MCF 10A (cell line): ENCODE measurements at regions of chr1 and their contacts with region 1.

Region 1: GRCh38 chr1:91885716-91886506 is at the start of gene TGFBR3:
- DNase-seq: peak; percentile 86
- H3K4me3 Mint-ChIP-seq: peak within 1 kb of the TSS; percentile 99
- H3K27ac Mint-ChIP-seq: peak within 1 kb of the TSS; percentile 92
- H3K4me1 Mint-ChIP-seq: peaks cover 26% of the 10 kb centered on the region
- H3K27me3 Mint-ChIP-seq: no peaks in the 10 kb centered on the region
- CTCF ChIP-seq: peak; percentile 51
- total RNA-seq, gene TGFBR3: 7.0 and 12.0 TPM in 2 replicates

Region 2: GRCh38 chr1:91511386-91511785 is 374.5 kb before region 1 on chr1:
- CTCF ChIA-PET with region 1: interaction called, 24 read pairs
- POLR2A ChIA-PET with region 1: interaction called, 12 read pairs
- intact Hi-C with region 1: loop called (anchors 5 kb)
- DNase-seq: peak; percentile 59
- H3K4me3 Mint-ChIP-seq: no peak overlapping the region
- H3K27ac Mint-ChIP-seq: no peak overlapping the region
- H3K4me1 Mint-ChIP-seq: peaks cover 15% of the 10 kb centered on the region
- H3K27me3 Mint-ChIP-seq: no peaks in the 10 kb centered on the region
- CTCF ChIP-seq: peak; percentile 62

Region 3: DNA sequence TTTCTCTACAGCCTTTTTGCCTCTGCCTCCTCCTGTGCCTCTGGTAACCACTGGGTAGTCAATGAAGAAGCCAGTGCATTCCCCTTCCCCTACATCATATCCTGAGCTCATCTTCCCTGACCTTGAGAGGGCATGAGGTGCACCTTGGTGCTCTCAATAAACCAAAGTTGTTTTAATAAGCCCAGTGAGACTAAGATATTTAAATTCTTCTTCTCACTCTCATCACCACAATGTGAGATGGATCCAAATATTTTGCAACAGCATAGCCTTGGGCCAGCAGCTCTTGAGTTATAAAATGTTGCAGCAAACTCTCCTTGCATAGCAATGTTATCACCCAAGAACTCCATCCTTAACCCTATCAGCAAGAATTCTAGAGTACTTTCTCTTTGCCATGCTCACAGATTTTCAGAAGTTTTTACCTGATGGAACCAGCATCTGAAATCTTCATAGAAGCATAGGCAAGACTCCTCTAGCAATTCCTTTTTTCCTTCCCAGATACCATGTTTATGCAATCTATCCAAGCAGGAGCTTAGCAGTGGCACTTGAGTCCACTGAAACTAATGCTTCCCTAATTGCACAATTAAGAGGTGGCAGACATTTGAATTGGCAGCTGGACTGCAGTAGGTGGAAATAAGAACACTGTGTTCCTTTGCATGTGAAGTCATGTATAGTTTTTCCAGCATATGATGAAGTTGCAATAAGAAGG is 348.5 kb before region 1 on chr1:
- CTCF ChIA-PET with region 1: interaction called, 9 read pairs
- POLR2A ChIA-PET with region 1: interaction called, 18 read pairs
- intact Hi-C with region 1: no loop called
- DNase-seq: peak; percentile 66
- H3K4me3 Mint-ChIP-seq: peak overlapping the region; percentile 19
- H3K27ac Mint-ChIP-seq: peak overlapping the region; percentile 76
- H3K4me1 Mint-ChIP-seq: peaks cover 25% of the 10 kb centered on the region
- H3K27me3 Mint-ChIP-seq: no peaks in the 10 kb centered on the region
- CTCF ChIP-seq: no peak

Region 4: GRCh38 chr1:91742848-91743292 is 143.0 kb before region 1 on chr1:
- CTCF ChIA-PET with region 1: interaction called, 4 read pairs
- POLR2A ChIA-PET with region 1: interaction called, 10 read pairs
- intact Hi-C with region 1: no loop called
- DNase-seq: peak; percentile 87
- H3K4me3 Mint-ChIP-seq: no peak overlapping the region
- H3K27ac Mint-ChIP-seq: peak overlapping the region; percentile 84
- H3K4me1 Mint-ChIP-seq: peaks cover 47% of the 10 kb centered on the region
- H3K27me3 Mint-ChIP-seq: no peaks in the 10 kb centered on the region
- CTCF ChIP-seq: no peak

Region 5: DNA sequence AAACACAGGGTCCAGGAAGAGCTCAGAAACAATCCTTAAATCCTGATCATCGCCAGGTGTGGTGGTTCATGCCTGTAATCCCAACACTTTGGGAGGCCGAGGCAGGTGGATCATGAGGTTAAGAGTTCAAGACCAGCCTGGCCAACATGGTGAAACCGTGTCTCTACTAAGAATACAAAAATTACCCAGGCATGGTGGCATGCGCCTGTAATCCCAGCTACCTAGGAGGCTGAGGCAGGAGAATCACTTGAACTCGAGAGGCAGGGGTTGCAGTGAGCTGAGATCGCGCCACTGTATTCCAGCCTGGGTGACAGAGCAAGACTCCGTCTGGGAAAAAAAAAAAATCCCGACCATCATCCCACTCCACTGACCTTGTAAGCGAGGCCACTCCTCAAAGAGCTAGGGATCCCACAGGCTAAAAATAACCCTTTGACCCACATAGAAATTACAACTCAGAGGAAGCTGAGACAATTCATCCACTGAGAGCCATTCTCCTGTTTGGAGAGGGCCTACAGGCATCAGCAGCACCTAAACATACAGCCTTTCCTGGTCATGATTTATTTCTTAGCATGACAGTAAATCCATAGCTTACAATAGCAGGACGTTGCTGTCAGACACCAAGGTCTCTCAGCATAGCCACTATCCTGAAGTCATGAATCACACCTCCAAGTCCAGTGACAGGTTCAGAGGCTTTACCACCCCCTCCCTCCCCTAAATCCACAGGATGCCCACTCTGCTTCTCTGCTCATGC is 66.7 kb before region 1 on chr1:
- CTCF ChIA-PET with region 1: interaction called, 10 read pairs
- POLR2A ChIA-PET with region 1: interaction called, 8 read pairs
- intact Hi-C with region 1: no loop called
- DNase-seq: no peak
- H3K4me3 Mint-ChIP-seq: no peak overlapping the region
- H3K27ac Mint-ChIP-seq: peak overlapping the region; percentile 85
- H3K4me1 Mint-ChIP-seq: peaks cover 32% of the 10 kb centered on the region
- H3K27me3 Mint-ChIP-seq: no peaks in the 10 kb centered on the region
- CTCF ChIP-seq: no peak

Region 6: GRCh38 chr1:91900538-91900937 is 14.6 kb after region 1 on chr1:
- CTCF ChIA-PET with region 1: interaction called, 8 read pairs
- POLR2A ChIA-PET with region 1: interaction called, 28 read pairs
- intact Hi-C with region 1: no loop called
- DNase-seq: peak; percentile 95
- H3K4me3 Mint-ChIP-seq: no peak overlapping the region
- H3K27ac Mint-ChIP-seq: no peak overlapping the region
- H3K4me1 Mint-ChIP-seq: peaks cover 11% of the 10 kb centered on the region
- H3K27me3 Mint-ChIP-seq: no peaks in the 10 kb centered on the region
- CTCF ChIP-seq: no peak